ENCODE measurements at regions of chr20 and their contacts with region 1.

Region 1: GRCh38 chr20:23245553-23246181 is 104.9 kb upstream of the NXT1 start:
- DNase-seq: peak; percentile 65 to 75
- ATAC-seq: peak; percentile 93 to 98
- H3K4me3 ChIP-seq: no peak overlapping the region
- H3K27ac ChIP-seq: peak overlapping the region in 1 of 2 experiments; percentile 34; a peak in 1 of 6 replicates
- H3K4me1 ChIP-seq: no peaks in the 10 kb centered on the region
- CTCF ChIP-seq: peak; percentile 71
- EP300 ChIP-seq: no peak
- POLR2A ChIP-seq: no peak
- RAD21 ChIP-seq: peak; percentile 63 to 64

Region 2: DNA sequence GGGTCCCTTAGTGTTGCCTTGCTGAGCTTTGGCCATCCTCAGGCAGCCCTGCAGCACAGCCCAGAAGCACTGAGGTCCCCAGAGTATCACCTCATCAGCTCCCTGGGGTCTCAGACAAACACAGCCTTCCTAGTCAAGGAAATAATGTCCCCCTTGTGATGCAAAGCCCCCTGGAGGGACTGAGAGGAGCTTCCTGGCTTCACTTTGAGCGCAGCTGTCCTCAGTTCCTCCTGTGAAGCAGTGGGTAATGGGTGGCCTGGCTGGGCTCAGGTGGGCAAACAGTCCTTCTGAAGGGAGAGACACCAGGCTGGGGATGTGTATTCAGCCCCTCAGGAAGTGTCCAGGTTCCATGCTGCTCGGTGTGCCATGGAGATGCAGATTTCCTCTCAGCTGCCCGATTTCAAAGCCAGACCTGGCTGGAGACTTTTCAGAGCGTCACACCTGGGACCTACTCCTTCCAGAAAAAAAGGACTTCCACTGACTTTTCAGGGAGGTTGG is 582.1 kb before region 1 on chr20:
- CTCF ChIA-PET with region 1: no interaction called
- POLR2A ChIA-PET with region 1: no interaction called
- DNase-seq: no peak
- ATAC-seq: peak in 1 of 2 experiments; percentile 43; a peak in 3 of 6 replicates
- H3K4me3 ChIP-seq: no peak overlapping the region
- H3K27ac ChIP-seq: no peak overlapping the region
- H3K4me1 ChIP-seq: no peaks in the 10 kb centered on the region
- CTCF ChIP-seq: no peak
- EP300 ChIP-seq: no peak
- POLR2A ChIP-seq: no peak
- RAD21 ChIP-seq: no peak

Region 3: GRCh38 chr20:23005776-23006175 is 239.9 kb before region 1 on chr20:
- CTCF ChIA-PET with region 1: no interaction called
- POLR2A ChIA-PET with region 1: no interaction called
- DNase-seq: no peak
- ATAC-seq: no peak
- H3K4me3 ChIP-seq: no peak overlapping the region
- H3K27ac ChIP-seq: peak overlapping the region in 1 of 2 experiments; percentile 47; a peak in 4 of 6 replicates
- H3K4me1 ChIP-seq: peaks cover 36% of the 10 kb centered on the region
- CTCF ChIP-seq: no peak
- EP300 ChIP-seq: no peak
- POLR2A ChIP-seq: no peak
- RAD21 ChIP-seq: no peak

Region 4: GRCh38 chr20:23235173-23236027 is 10.3 kb before region 1 on chr20:
- CTCF ChIA-PET with region 1: interaction called, 24 read pairs
- POLR2A ChIA-PET with region 1: no interaction called
- DNase-seq: peak; percentile 47 to 78
- ATAC-seq: peak; percentile 73 to 94; a peak in 5 of 6 replicates
- H3K4me3 ChIP-seq: no peak overlapping the region
- H3K27ac ChIP-seq: no peak overlapping the region
- H3K4me1 ChIP-seq: peaks cover 2% of the 10 kb centered on the region; the same call in 1 of the 3 replicates
- CTCF ChIP-seq: peak; percentile 53
- EP300 ChIP-seq: no peak
- POLR2A ChIP-seq: no peak
- RAD21 ChIP-seq: peak; percentile 52 to 71; a peak in 4 of 5 replicates

Region 5: GRCh38 chr20:23257848-23258746 is 12.4 kb after region 1 on chr20:
- CTCF ChIA-PET with region 1: interaction called, 11 read pairs
- POLR2A ChIA-PET with region 1: no interaction called
- DNase-seq: no peak
- ATAC-seq: no peak
- H3K4me3 ChIP-seq: no peak overlapping the region
- H3K27ac ChIP-seq: no peak overlapping the region
- H3K4me1 ChIP-seq: 0 out of 3 replicates have a peak, but pooled peaks cover 5% of the 10 kb centered on the region
- CTCF ChIP-seq: no peak
- EP300 ChIP-seq: no peak
- POLR2A ChIP-seq: no peak
- RAD21 ChIP-seq: no peak

Region 6: DNA sequence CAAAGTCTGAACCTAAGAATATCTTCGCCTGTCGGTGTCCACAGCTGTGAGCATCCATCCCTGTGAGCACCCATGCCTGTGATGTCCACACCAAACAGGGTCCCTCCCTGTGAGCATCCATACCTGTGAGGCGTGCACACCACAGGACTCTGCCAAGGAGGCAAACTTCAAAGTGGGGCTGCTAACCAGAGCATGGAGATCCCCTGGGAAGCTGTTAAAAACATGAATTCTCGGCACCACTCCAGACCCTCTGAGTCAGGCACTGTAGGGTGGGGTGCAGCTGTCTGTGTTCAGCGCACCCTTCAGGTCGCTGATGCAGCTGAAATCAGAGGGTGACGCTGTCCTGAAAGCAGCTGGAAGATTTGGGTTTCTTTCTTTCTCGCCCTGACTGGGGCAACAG is 19.6 kb after region 1 on chr20:
- CTCF ChIA-PET with region 1: interaction called, 15 read pairs
- POLR2A ChIA-PET with region 1: no interaction called
- DNase-seq: no peak
- ATAC-seq: no peak
- H3K4me3 ChIP-seq: no peak overlapping the region
- H3K27ac ChIP-seq: no peak overlapping the region
- H3K4me1 ChIP-seq: peaks cover 25% of the 10 kb centered on the region
- CTCF ChIP-seq: no peak
- EP300 ChIP-seq: no peak
- POLR2A ChIP-seq: no peak
- RAD21 ChIP-seq: no peak

Region 7: GRCh38 chr20:23492292-23492691 is 246.6 kb after region 1 on chr20:
- CTCF ChIA-PET with region 1: no interaction called
- POLR2A ChIA-PET with region 1: no interaction called
- DNase-seq: no peak
- ATAC-seq: peak in 1 of 2 experiments; percentile 30; a peak in 2 of 6 replicates
- H3K4me3 ChIP-seq: no peak overlapping the region
- H3K27ac ChIP-seq: no peak overlapping the region
- H3K4me1 ChIP-seq: no peaks in the 10 kb centered on the region
- CTCF ChIP-seq: no peak
- EP300 ChIP-seq: no peak
- POLR2A ChIP-seq: no peak
- RAD21 ChIP-seq: no peak